Panc1 (cell line): ENCODE measurements at regions of chr10 and their contacts with region 1.

Region 1: DNA sequence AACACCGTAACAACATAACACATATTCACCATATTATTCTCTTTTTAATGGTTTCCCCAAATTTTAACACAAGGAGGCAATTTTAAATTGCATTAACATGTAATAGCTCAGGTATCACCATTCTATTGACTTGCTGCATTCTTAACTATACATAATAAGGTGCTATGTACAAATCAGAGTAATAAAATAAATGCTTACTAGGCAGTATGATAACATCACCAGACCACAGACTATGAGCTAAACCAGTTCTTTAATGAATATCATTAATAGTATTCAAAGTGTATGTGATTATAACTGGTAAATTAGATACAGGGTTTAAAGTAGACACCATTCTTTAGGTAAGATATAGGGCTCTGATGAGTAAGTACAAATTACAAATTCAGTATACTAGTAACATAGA is 226.6 kb downstream of the DNAJC1 start:
- DNase-seq: no peak
- ATAC-seq: no peak
- H3K4me3 ChIP-seq: no peak overlapping the region
- H3K27ac ChIP-seq: no peak overlapping the region
- H3K4me1 ChIP-seq: no peaks in the 10 kb centered on the region
- H3K27me3 ChIP-seq: no peaks in the 10 kb centered on the region
- CTCF ChIP-seq: no peak

Region 2: DNA sequence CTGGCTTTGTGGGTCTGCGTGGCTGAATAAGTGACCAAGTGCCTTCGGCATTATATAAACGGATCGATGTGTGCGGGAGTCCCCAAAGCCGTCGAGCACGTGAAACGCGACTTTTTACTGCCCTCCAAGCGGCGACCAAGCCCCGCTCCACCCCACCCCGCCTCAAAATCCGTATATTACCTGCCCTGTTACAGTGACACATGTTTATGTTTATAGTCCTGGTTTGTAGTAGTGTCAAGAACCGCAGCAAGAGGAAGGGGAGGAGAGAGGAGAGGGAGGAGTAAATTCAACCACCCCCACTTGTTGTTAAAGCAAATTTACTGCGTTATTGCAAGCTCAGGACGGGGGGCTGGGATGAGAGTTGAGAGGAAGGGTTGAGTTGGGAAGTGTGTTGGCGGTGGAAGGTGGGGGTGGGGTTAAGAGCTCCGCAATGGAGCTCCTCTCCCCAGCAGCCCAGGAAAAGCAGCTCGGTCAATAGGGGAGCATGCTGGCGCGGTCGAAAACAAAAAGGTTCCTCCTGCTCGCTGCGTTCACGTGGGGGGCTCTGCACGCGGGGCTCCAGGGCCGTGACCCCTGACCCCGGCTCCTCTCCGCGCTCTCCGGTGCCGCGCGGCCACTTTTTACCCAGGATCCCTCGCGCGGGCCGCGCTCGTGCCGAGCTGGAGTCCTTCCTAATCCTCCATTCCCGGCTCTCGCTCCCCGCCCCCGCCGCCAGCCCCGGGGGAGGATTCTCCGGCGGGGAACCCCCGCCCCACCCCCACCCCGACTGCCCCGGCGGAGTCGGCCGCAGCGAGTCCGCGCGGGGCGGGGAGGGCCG is 251.3 kb before region 1 on chr10 and contains the start of gene SKIDA1:
- CTCF ChIA-PET with region 1: no interaction called
- POLR2A ChIA-PET with region 1: no interaction called
- in situ Hi-C with region 1: no loop called
- intact Hi-C with region 1: no loop called
- DNase-seq: no peak
- ATAC-seq: peak; percentile 77
- H3K4me3 ChIP-seq: peak within 1 kb of the TSS; percentile 48 to 78
- H3K27ac ChIP-seq: peak within 1 kb of the TSS; percentile 97
- H3K4me1 ChIP-seq: peaks cover 44% of the 10 kb centered on the region
- H3K27me3 ChIP-seq: no peaks in the 10 kb centered on the region
- CTCF ChIP-seq: no peak
- total RNA-seq, gene SKIDA1: 9.3 TPM

Region 3: DNA sequence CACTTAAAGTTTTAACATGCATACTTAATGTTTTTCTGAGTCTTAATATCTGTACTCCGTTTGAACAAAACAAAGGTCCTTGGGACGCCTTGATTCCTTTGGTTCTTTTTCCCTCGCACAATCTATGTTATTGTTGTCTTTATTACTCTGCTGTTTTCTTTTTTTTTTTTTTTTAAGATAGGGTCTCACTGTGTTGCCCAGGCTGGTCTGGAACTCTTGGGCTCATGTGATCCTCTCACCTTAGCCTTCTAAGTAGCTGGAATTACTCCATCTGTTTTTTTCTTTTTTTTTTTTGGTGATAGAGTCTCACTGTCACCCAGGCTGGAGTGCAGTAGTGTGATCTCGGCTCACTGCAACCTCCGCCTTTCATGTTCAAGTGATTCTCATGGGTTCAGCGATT is 229.6 kb before region 1 on chr10:
- CTCF ChIA-PET with region 1: no interaction called
- POLR2A ChIA-PET with region 1: interaction called, 14 read pairs
- in situ Hi-C with region 1: no loop called
- intact Hi-C with region 1: no loop called
- DNase-seq: no peak
- ATAC-seq: no peak
- H3K4me3 ChIP-seq: no peak overlapping the region
- H3K27ac ChIP-seq: no peak overlapping the region
- H3K4me1 ChIP-seq: no peaks in the 10 kb centered on the region
- H3K27me3 ChIP-seq: no peaks in the 10 kb centered on the region
- CTCF ChIP-seq: no peak

Region 4: DNA sequence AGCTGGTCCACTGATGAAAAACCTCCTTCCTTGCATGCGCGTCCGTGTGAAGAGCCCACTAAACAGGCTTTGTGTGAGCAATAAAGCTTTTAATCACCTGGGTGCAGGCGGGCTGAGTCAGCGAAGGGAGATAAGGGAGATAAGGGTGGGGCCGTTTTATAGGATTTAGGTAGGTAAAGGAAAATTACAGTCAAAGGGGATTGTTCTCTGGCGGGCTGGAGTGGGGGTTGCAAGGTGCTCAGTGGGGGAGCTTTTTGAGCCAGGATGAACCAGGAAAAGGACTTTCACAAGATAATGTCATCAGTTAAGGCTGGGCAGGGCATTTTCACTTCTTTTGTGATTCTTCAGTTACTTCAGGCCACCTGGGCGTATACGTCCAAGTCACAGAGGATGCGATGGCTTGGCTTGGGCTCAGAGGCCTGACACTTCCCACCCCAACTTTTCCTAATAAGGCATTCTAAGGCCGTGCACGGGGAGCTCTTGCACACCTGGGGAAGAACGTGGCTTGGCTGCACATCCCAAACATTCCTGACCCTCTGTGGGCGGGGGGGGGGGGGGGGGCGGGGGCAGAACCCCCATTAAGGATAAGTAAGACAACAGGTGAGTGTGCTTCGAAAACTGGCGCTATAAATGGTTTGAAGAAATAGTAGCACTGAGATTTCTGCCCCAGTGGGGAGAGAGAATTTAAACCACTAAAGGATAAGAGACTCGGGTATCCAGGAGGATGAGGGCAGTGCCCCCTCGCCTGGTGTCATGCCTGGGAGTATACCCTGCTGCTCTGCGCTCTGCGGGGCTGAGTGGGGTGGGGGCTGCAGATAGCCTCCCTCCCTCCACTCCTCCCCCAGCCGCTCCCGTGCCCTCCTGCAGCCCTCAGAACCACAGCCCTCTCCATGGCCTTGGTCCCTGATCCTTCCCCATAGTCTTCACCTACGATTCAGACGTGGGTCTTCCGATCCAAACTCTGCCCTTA is 25.3 kb before region 1 on chr10:
- CTCF ChIA-PET with region 1: no interaction called
- POLR2A ChIA-PET with region 1: no interaction called
- in situ Hi-C with region 1: no loop called
- intact Hi-C with region 1: no loop called
- DNase-seq: no peak
- ATAC-seq: no peak
- H3K4me3 ChIP-seq: no peak overlapping the region
- H3K27ac ChIP-seq: no peak overlapping the region
- H3K4me1 ChIP-seq: 0 out of 2 replicates have a peak, but pooled peaks cover 3% of the 10 kb centered on the region
- H3K27me3 ChIP-seq: no peaks in the 10 kb centered on the region
- CTCF ChIP-seq: no peak